Posterior cingulate gyrus (tissue), 11 donors: ENCODE measurements at regions of chr17 and their contacts with region 1.

Region 1: DNA sequence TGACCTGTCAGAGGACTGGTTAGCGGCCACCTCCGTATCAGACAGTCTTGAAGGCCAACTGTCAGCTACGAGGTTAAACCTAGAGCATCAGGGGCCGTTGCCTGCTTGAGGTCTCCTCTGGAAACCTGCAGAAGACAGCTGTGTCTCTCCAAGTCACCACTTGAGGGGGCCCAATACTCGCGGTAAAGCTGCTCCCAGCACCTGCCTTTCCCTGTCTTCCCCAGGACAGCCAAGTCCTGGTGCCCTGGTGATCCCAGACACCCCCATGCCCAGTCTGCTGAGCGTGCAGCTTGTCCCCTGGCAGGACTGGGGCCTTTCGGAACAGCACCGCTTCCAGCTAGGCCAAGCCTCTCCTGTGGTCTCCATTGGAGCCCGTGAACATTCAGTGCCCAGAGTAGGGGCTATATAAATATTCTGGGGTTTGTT is 80.1 kb downstream of the DNAH17 start:
- DNase-seq: peak; percentile 75 to 98 (median 84)

Region 2: DNA sequence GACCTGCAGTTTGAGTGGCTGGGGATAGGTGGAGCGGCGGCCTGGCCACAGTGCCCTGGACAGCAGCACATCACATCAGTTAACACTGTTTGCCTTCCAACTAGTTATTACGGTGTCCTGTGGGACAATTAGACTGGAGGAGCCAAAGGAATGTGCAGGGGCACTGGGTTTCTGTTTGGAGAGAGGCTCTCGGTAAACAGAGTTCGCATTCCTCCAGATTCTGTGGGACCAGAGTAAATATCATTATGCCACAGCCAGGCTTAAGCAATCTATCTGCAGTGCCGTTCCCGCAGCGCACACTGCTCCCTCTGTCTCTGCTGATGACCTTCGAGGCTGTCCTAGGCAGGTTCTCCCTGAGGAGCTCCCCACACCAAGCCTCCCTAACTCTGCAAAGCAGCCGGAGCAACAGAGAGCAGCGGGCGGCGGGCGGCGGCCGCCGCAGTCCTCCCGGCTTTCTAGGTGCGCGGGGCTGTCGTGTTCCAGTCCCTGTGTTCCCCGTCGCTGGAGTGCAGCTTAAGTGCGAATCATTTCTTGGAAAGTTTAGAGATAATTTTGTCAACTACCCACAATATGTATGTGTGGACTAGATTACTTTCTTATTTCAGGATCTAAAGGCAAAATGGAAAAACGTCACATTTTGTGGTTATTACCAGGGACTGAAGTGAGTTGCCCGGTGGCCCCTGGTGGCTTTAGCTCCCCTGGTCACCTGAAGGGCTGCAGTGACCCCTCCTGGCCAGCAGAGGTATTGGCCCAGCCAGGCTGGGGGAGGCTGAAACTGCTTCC is 75.5 kb before region 1 on chr17:
- intact Hi-C with region 1: no loop called
- DNase-seq: peak; percentile 55 to 96 (median 81)

Region 3: DNA sequence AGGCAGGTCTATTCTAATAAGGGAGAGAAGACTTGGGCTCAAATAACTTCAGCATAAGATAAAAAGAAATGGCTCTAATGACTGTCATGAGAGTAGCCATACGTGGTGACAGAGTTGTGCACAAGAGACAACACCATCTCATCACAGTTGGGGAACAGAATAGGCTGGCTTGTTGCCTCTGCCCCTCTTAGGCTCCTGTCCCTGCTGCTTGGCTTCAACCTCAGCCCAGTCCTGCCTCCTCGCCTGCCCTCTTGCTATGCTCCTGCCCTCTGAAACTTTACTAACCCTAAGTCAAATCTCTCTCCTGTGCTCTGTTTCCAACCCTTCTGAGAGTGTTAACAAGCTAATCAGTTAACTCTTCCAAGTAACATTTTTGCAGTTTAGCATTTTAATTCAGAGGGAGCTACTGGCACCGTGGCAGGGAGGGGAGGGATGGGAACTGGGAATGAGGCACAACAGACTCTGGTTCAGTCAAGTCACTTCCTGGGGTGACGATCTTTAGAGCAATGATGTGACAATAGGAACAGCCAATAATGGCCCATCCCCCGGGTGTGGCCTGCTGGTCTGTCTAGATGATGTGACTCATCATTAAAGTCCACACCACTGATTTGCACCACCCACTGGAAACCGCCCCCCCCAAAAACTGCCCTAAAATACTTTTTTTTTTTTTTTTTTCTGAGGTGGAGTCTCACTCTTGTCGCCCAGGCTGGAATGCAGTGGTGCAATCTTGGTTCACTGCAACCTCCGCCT is 44.5 kb after region 1 on chr17:
- intact Hi-C with region 1: no loop called
- DNase-seq: peak in 1 of 10 donors; percentile 21

Region 4: GRCh38 chr17:78645421-78646295 is 148.5 kb after region 1 on chr17:
- intact Hi-C with region 1: no loop called
- DNase-seq: peak in 7 of 10 donors; percentile 23 to 89 (median 45)

Region 5: GRCh38 chr17:78708510-78708973 is 211.4 kb after region 1 on chr17:
- intact Hi-C with region 1: loop called (anchors 1 kb)
- DNase-seq: peak; percentile 63 to 98 (median 82)

Region 6: GRCh38 chr17:78745407-78746088 is 248.4 kb after region 1 on chr17:
- intact Hi-C with region 1: loop called (anchors 2 kb)
- DNase-seq: peak in 2 of 10 donors; percentile 23 to 48

Region 7: GRCh38 chr17:78798695-78799559 is 301.8 kb after region 1 on chr17:
- intact Hi-C with region 1: loop called (anchors 2 kb)
- DNase-seq: peak in 2 of 10 donors; percentile 33 to 40